Heart right ventricle (tissue), 16 donors: ENCODE measurements at regions of chr15 and their contacts with region 1.

Region 1: DNA sequence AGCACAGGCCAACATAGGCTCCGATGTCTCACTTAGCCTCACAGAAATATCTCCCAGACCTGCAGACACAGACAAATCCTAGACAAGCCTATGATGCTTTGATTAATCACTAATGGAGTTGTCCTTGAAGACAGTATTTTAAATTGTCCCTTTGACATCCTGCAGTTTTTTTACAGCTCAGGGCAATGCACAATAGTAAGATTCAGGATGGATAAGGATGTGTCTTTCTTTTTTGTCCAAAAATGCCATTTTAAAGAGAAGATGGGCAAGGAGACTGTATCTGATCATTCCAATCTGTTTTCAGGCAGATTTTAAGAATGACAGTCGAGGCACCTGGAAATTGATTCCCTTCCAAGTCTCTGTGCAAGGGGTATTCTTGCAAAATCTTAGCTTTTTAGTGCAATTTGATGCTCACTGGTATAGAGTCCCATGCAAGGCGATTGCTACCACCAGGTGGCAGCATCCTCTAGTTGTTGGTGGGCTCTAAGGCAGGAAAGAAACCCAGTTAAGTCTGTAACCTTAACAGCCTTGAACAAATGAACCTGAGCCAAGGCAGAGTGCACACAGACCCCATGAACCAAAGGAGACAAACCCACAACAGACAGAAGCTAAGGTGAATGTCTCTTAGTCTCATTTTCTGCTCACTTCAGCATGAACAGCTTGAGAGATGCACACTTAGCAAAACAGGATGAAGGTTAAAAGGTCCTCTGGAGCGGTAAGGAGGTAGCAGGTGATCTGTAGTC is 51.2 kb upstream of the MINAR1 start:
- DNase-seq: peak; percentile 60 to 73
- ATAC-seq: peak; percentile 73 to 89 (median 80)
- H3K4me3 ChIP-seq: no peak overlapping the region
- H3K27ac ChIP-seq: no peak overlapping the region
- H3K4me1 ChIP-seq: no peaks in the 10 kb centered on the region
- H3K27me3 ChIP-seq: no peaks in the 10 kb centered on the region
- CTCF ChIP-seq: peak; percentile 80 to 93 (median 90)

Region 2: DNA sequence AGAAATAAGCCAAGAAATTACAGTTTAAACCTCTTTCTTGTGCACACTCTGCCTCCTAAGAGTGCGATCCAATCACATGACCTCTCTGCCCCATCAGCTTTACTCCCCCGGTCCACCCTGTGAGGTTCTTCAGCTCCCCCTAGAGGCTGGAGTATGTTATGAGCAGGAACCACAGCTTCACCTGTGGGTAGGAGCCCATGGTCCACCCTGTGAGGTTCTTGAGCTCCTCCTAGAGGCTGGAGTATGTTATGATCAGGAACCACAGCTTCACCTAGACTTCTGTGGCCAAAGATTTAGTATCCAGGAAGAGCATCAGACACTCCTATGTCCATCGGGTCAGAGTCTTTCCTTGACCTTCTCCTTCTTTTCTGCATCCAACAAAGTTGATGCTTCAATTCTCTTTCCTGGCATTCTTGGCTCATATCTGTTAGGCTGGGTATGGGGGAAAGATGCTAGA is 215.2 kb after region 1 on chr15:
- intact Hi-C with region 1: loop called in 7 of 10 experiments (anchors 5 to 10 kb)
- DNase-seq: peak in 1 of 2 donors; percentile 8
- ATAC-seq: peak in 6 of 8 donors; percentile 23 to 71 (median 48)
- H3K4me3 ChIP-seq: no peak overlapping the region
- H3K27ac ChIP-seq: no peak overlapping the region
- H3K4me1 ChIP-seq: no peaks in the 10 kb centered on the region
- H3K27me3 ChIP-seq: peaks cover 0 to 19% (median 11%) of the 10 kb centered on the region in 7 donors
- CTCF ChIP-seq: peak in 8 of 9 donors; percentile 10 to 81 (median 53)

Region 3: GRCh38 chr15:79853458-79854328 is 472.8 kb after region 1 on chr15:
- intact Hi-C with region 1: loop called (anchors 1 to 10 kb)
- DNase-seq: peak; percentile 14 to 48
- ATAC-seq: peak; percentile 61 to 91 (median 85)
- H3K4me3 ChIP-seq: no peak overlapping the region
- H3K27ac ChIP-seq: no peak overlapping the region
- H3K4me1 ChIP-seq: no peaks in the 10 kb centered on the region
- H3K27me3 ChIP-seq: no peaks in the 10 kb centered on the region
- CTCF ChIP-seq: peak; percentile 80 to 97 (median 93)

Region 4: DNA sequence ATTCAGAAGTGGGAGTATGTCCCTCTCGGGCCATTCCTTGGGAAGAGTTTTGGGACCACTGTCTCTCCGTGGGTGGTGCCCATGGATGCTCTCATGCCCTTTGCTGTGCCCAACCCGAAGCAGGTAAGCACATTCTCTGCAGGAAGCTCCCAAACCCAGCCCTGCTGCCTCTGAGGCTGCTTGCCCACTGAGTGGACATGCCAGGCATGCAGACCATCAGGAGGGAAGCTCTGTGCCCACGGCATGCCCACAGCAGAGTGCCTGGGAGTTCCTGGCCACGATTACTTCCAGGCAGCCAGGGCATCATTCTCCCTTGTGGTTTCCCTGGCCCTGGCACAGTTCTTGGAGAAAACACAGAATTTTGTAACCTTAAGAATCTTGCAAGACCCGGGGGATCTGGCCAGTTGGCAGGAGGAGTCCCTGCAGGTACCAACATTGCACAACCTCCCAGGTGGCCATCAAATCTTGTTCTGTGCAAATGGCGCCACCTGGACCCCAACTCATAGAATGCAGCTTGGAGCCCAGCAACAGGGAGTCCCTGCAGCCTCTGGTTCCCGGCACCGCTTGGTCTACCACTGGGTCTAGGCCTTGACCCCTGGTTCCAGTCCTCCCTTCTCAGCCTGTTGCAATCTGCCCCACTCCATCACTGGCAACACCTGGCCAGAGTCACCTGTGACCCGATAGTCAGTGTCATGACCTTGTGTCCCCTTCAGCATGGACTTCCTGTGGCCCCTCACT is 792.3 kb after region 1 on chr15:
- intact Hi-C with region 1: loop called in 4 of 10 experiments (anchors 5 to 10 kb)
- DNase-seq: peak; percentile 47 to 53
- ATAC-seq: peak; percentile 33 to 85 (median 74)
- H3K4me3 ChIP-seq: no peak overlapping the region
- H3K27ac ChIP-seq: no peak overlapping the region
- H3K4me1 ChIP-seq: peaks cover 0 to 15% (median 3%) of the 10 kb centered on the region in 9 donors
- H3K27me3 ChIP-seq: no peaks in the 10 kb centered on the region
- CTCF ChIP-seq: peak; percentile 52 to 75 (median 68)